ENCODE measurements at regions of chr17 and their contacts with region 1.

Region 1: GRCh38 chr17:80892019-80892855 is 99.4 kb upstream of the CHMP6 start:
- DNase-seq: peak in 7 of 9 donors; percentile 17 to 81 (median 48)
- ATAC-seq: peak; percentile 86
- H3K4me3 ChIP-seq: peak overlapping the region; percentile 40
- H3K4me3 Mint-ChIP-seq: peak overlapping the region in 8 of 10 donors; percentile 64 to 89 (median 74)
- H3K27ac ChIP-seq: peak overlapping the region; percentile 66
- H3K27ac Mint-ChIP-seq: peak overlapping the region; percentile 79 to 100 (median 93)
- H3K4me1 ChIP-seq: peaks cover 38 to 39% of the 10 kb centered on the region in 2 donors
- H3K4me1 Mint-ChIP-seq: peaks cover 12 to 80% (median 40%) of the 10 kb centered on the region in 7 donors
- H3K27me3 ChIP-seq: no peaks in the 10 kb centered on the region
- H3K27me3 Mint-ChIP-seq: no peaks in the 10 kb centered on the region

Region 2: DNA sequence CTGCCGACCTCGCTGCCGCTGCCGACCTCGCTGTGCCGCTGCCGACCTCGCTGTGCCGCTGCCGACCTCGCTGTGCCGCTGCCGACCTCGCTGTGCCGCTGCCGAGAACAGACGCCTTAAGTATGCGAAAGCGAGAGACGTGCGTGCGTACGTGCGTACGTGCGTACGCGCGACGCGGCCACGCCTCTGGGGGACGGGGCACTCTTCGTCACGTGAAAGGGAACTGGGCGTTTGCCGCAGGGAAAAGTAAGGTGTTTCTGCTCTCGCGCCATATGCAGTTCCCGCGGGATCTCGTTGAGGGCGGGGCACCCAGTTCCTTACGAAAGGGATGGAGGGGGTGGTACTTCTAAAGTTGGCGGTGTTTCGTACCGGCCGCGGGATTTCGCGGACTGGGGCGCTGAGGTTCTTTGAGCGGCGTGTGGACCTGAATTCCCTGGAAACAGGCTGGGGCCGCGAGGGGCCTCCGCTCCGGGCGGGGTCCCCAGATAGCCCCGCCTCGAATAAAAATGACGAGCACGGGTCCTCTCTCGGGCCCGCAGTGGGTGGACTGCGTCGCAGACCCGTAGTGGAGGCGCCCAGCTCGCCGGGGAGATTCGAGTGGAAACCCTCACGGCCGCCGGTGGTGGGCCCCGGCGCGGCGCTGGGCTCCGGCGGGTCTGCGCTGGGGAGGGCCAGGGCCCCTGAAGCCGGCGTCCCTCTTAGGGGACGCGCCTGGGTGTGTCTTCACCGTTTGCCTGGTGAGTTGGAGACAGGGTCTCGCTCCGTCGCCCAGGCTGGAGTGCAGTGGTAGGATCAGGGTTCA is 745.0 kb before region 1 on chr17 and contains the start of gene EIF4A3:
- CTCF ChIA-PET with region 1: no interaction called
- POLR2A ChIA-PET with region 1: no interaction called
- intact Hi-C with region 1: loop called in 1 of 2 experiments (anchors 5 kb)
- DNase-seq: peak; percentile 84 to 98 (median 96)
- ATAC-seq: peak; percentile 97
- H3K4me3 ChIP-seq: peak within 1 kb of the TSS; percentile 64
- H3K4me3 Mint-ChIP-seq: peak within 1 kb of the TSS; percentile 81 to 100 (median 98)
- H3K27ac ChIP-seq: peak within 1 kb of the TSS; percentile 91
- H3K27ac Mint-ChIP-seq: peak within 1 kb of the TSS; percentile 68 to 100 (median 97)
- H3K4me1 ChIP-seq: peaks cover 19 to 21% of the 10 kb centered on the region in 2 donors
- H3K4me1 Mint-ChIP-seq: peaks cover 15 to 59% (median 44%) of the 10 kb centered on the region in 7 donors
- H3K27me3 ChIP-seq: no peaks in the 10 kb centered on the region
- H3K27me3 Mint-ChIP-seq: no peaks in the 10 kb centered on the region
- total RNA-seq, gene EIF4A3: 48.6 to 128 (median 75.9) TPM

Region 3: DNA sequence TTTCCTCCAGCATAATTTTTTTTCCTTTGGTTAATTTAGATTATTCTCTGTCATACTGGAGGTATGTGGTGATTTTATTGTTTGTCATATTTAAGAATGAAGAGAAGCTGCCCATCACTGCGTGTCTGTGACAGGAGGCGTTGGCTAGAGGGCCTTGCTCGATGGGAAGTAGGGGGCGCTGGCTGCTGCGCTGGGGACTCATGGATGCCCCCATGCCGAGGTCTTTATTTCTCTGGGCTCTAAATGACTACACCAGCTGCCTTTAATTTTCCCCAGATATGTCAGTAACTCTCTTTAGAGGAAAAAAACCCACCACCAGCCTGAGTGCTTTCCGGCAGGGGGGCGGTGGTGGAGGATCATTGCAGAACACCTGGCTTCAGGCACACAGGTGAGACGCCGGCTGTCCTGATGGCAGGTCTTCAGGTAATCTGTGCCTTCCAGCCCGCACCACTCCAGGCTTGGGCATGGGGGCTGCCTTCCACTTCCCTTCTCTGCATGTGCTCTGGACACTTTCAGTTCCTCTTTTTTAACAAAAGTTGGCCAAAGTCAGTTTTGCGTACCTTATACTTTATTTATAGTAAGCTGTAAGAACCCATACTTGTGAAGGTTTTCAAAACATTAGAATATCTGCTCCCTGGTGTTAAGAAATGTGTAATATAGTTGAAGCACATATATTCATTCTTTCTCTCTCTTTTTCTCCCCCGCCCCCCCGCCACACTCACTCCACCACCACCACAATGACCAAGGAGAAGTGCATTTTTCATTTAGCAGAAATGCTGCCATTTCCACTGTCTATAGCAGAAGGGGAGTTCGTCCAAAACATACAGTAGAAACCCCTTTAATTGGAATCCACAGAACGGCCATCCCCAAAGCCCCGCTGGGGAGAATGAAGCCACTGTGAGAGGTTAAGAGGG is 154.9 kb before region 1 on chr17:
- CTCF ChIA-PET with region 1: no interaction called
- POLR2A ChIA-PET with region 1: no interaction called
- intact Hi-C with region 1: loop called in 1 of 2 experiments (anchors 10 kb)
- DNase-seq: no peak
- ATAC-seq: peak; percentile 50
- H3K4me3 ChIP-seq: no peak overlapping the region
- H3K4me3 Mint-ChIP-seq: peak overlapping the region in 4 of 10 donors; percentile 27 to 79 (median 42)
- H3K27ac ChIP-seq: peak overlapping the region; percentile 70
- H3K27ac Mint-ChIP-seq: peak overlapping the region; percentile 30 to 96 (median 87)
- H3K4me1 ChIP-seq: peaks cover 0 to 45% of the 10 kb centered on the region in 2 donors
- H3K4me1 Mint-ChIP-seq: peaks cover 24 to 91% (median 75%) of the 10 kb centered on the region in 7 donors
- H3K27me3 ChIP-seq: no peaks in the 10 kb centered on the region
- H3K27me3 Mint-ChIP-seq: no peaks in the 10 kb centered on the region

Region 4: GRCh38 chr17:80832888-80833583 is 59.2 kb before region 1 on chr17:
- CTCF ChIA-PET with region 1: no interaction called
- POLR2A ChIA-PET with region 1: no interaction called
- intact Hi-C with region 1: loop called (anchors 1 to 5 kb)
- DNase-seq: peak; percentile 43 to 83 (median 67)
- ATAC-seq: peak; percentile 93
- H3K4me3 ChIP-seq: peak overlapping the region; percentile 36
- H3K4me3 Mint-ChIP-seq: peak overlapping the region; percentile 74 to 89 (median 88)
- H3K27ac ChIP-seq: peak overlapping the region; percentile 80
- H3K27ac Mint-ChIP-seq: peak overlapping the region; percentile 83 to 99 (median 94)
- H3K4me1 ChIP-seq: peaks cover 9 to 12% of the 10 kb centered on the region in 2 donors
- H3K4me1 Mint-ChIP-seq: peaks cover 13 to 67% (median 40%) of the 10 kb centered on the region in 7 donors
- H3K27me3 ChIP-seq: no peaks in the 10 kb centered on the region
- H3K27me3 Mint-ChIP-seq: no peaks in the 10 kb centered on the region

Region 5: DNA sequence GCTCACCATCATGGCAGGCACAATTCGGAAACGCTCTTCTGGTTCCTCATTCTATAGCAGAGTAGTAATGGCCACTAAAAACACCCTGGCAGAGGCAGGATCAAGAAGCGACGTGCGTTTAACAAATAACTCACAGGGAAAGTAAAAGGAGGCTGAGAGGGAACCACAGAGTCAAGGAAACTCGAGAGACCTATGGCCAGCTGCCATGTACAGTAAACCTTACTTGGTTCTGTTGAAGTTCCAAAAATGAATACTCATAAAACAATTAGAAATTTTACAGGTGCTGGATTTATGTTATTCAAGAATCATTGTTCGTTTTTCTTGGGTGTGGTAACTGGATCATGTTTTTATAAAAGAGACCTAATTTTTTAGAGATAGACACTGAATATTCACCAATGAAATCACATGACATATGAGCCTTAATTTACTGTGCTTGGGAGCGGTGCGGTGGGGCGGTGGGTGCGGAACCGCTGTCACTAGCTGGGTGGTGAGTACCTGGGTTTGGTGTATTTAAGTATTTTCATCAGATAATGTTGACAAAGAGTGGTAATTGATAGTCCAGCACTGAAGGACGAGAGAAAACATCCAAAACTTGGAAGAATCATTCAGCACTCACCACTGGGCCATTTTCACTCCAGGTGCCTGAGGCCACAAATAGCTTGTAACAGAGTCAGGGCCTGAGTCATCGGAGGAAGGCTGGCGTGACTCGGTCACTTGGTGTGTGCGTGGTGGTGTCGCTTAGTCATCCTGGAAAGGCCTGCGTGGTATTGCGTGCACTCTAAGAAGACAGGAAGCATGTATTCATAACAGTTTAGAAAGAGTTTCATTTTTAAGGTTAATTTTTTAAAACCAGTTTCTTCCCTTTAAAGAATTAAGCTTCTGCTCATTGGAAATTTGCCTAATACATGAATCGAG is 36.0 kb before region 1 on chr17:
- CTCF ChIA-PET with region 1: no interaction called
- POLR2A ChIA-PET with region 1: no interaction called
- intact Hi-C with region 1: loop called in 1 of 2 experiments (anchors 1 kb)
- DNase-seq: peak in 2 of 9 donors; percentile 26 to 80
- ATAC-seq: peak; percentile 92
- H3K4me3 ChIP-seq: no peak overlapping the region
- H3K4me3 Mint-ChIP-seq: peak overlapping the region in 6 of 10 donors; percentile 18 to 71 (median 30)
- H3K27ac ChIP-seq: peak overlapping the region; percentile 19
- H3K27ac Mint-ChIP-seq: peak overlapping the region in 8 of 9 donors; percentile 23 to 95 (median 70)
- H3K4me1 ChIP-seq: peaks cover 10 to 27% of the 10 kb centered on the region in 2 donors
- H3K4me1 Mint-ChIP-seq: peaks cover 23 to 78% (median 55%) of the 10 kb centered on the region in 7 donors
- H3K27me3 ChIP-seq: no peaks in the 10 kb centered on the region
- H3K27me3 Mint-ChIP-seq: no peaks in the 10 kb centered on the region

Region 6: DNA sequence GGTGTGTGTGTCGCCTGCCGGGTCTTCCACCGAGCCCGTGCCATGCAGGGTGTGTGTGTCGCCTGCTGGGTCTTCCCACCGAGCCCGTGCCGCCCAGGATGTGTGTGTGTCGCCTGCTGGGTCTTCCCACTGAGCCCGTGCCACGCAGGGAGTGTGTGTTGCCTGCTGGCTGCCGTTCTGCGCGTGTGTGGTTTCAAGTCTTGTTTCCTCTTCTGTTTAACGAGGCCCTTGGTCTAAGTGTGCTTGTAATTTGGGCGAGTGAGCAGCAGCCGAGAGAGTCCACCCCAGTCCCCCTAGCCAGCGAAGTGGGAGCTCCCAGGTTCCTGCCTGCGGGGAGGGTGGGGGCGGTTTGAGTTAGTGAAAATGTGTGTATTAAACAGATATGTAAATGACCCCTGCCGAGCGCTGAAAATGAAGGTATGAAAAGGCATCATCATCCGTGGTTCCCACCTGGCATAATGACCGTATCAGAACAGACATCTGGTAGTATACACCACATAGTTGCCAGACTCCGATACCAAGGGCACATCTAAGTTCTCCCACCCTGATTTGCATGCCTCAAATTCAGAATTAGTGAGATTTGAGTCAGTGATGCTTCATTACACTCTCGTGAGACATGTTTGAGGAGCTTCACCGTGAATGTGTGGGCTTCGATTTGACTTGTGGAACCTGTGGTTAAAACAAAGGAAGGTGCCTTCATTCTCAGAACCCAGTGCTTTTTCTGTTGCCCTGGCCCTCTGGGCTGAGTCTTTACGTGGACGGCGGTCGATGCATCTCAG is 15.1 kb before region 1 on chr17:
- CTCF ChIA-PET with region 1: interaction called, 4 read pairs
- POLR2A ChIA-PET with region 1: interaction called, 5 read pairs
- intact Hi-C with region 1: loop called (anchors 1 kb)
- DNase-seq: peak in 6 of 9 donors; percentile 18 to 68 (median 36)
- ATAC-seq: peak; percentile 46
- H3K4me3 ChIP-seq: peak overlapping the region; percentile 22
- H3K4me3 Mint-ChIP-seq: peak overlapping the region; percentile 70 to 96 (median 79)
- H3K27ac ChIP-seq: peak overlapping the region; percentile 5
- H3K27ac Mint-ChIP-seq: peak overlapping the region; percentile 20 to 99 (median 86)
- H3K4me1 ChIP-seq: peaks cover 15 to 35% of the 10 kb centered on the region in 2 donors
- H3K4me1 Mint-ChIP-seq: peaks cover 31 to 55% (median 45%) of the 10 kb centered on the region in 7 donors
- H3K27me3 ChIP-seq: no peaks in the 10 kb centered on the region
- H3K27me3 Mint-ChIP-seq: no peaks in the 10 kb centered on the region